ENCODE measurements at regions of chr12 and their contacts with region 1.

Region 1: DNA sequence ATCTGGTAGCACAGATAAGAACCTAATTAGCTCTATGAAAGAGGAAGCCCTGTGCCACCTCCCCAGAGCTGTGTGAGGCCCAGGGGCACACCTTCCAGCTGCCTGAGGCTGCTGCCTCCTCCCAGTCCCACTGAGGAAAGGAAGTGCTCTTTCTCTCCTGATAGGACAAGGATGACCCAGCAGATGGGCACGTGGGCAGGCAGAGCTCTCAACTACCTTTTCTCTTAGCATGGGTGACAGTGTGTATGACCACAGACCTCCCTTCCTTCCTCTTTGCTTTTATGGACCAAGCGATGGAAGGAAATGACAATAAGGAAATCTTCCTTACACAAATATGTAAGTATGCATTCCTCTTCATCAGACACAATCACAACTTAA is 127.6 kb upstream of the AMIGO2 start:
- DNase-seq: peak; percentile 71
- H3K4me3 Mint-ChIP-seq: peak overlapping the region; percentile 60
- H3K27ac Mint-ChIP-seq: peak overlapping the region; percentile 89
- H3K4me1 Mint-ChIP-seq: peaks cover 70% of the 10 kb centered on the region
- H3K27me3 Mint-ChIP-seq: no peaks in the 10 kb centered on the region

Region 2: GRCh38 chr12:47079468-47079980 is 127.8 kb before region 1 on chr12 and contains the starts of genes AMIGO2 and PCED1B:
- CTCF ChIA-PET with region 1: interaction called, 12 read pairs
- POLR2A ChIA-PET with region 1: interaction called, 49 read pairs
- DNase-seq: peak; percentile 68
- H3K4me3 Mint-ChIP-seq: peak within 1 kb of the TSS; percentile 92
- H3K27ac Mint-ChIP-seq: peak within 1 kb of the TSS; percentile 79
- H3K4me1 Mint-ChIP-seq: peaks cover 67% of the 10 kb centered on the region
- H3K27me3 Mint-ChIP-seq: no peaks in the 10 kb centered on the region
- total RNA-seq, gene AMIGO2: 6.6 to 7.1 TPM
- total RNA-seq, gene PCED1B: 57.1 to 62.2 TPM

Region 3: DNA sequence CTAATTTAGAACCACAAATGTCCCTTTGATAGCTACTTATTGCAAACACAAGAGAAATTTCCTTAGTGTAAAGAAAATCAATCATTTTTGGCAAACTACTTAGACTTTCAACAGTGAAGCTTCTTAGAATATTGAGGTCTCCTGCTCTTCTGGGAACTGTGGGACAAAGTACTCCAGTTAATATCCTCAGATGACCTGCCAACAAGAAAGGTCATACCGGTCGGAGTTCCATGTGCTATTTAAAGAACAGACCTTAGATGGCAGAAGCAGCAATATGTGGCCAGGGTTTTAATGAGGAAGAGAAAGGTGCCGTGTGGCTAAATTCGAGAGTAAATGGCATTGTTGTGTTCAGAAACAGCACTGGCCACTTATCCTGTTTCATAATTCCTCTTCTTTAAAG is 12.8 kb before region 1 on chr12:
- CTCF ChIA-PET with region 1: interaction called, 41 read pairs
- POLR2A ChIA-PET with region 1: interaction called, 61 read pairs
- DNase-seq: no peak
- H3K4me3 Mint-ChIP-seq: no peak overlapping the region
- H3K27ac Mint-ChIP-seq: peak overlapping the region; percentile 84
- H3K4me1 Mint-ChIP-seq: peaks cover 56% of the 10 kb centered on the region
- H3K27me3 Mint-ChIP-seq: no peaks in the 10 kb centered on the region

Region 4: GRCh38 chr12:47224563-47225133 is 17.3 kb after region 1 on chr12:
- CTCF ChIA-PET with region 1: interaction called, 6 read pairs
- POLR2A ChIA-PET with region 1: interaction called, 222 read pairs
- DNase-seq: no peak
- H3K4me3 Mint-ChIP-seq: no peak overlapping the region
- H3K27ac Mint-ChIP-seq: no peak overlapping the region
- H3K4me1 Mint-ChIP-seq: peaks cover 72% of the 10 kb centered on the region
- H3K27me3 Mint-ChIP-seq: no peaks in the 10 kb centered on the region

Region 5: DNA sequence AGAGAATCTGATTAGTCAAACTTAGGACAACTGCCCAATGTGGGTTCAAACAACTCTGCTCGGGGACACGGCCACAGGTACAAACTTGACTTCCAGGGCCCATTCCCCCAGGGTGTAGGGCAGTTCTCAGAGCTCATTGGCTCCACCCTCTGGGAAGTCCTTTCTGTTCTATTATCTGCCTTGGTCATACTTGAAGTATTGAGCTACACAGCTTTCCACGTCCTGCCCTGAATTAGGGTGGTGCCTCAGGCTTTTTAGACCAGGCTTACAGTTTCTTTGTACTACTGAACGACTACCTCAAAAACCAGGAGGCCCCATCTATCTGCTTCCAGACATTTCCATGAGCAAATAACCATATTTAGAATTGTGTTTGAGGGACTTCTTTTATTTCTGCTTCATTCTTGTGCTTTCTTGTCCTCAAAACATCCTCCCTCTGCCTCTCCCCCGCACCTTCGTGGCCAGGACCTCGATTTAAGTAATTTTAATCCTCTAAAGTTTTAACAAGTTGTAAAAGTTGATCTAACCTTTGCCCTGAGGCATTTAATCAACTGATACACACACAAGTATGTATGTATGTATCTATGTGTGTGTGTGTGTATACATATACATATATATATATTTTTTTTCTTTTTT is 154.2 kb after region 1 on chr12:
- CTCF ChIA-PET with region 1: no interaction called
- POLR2A ChIA-PET with region 1: interaction called, 97 read pairs
- DNase-seq: peak; percentile 68
- H3K4me3 Mint-ChIP-seq: peak overlapping the region; percentile 76
- H3K27ac Mint-ChIP-seq: peak overlapping the region; percentile 100
- H3K4me1 Mint-ChIP-seq: peaks cover 60% of the 10 kb centered on the region
- H3K27me3 Mint-ChIP-seq: no peaks in the 10 kb centered on the region

Region 6: GRCh38 chr12:47408171-47408871 is 201.0 kb after region 1 on chr12:
- CTCF ChIA-PET with region 1: interaction called, 4 read pairs
- POLR2A ChIA-PET with region 1: interaction called, 11 read pairs
- DNase-seq: peak; percentile 61
- H3K4me3 Mint-ChIP-seq: no peak overlapping the region
- H3K27ac Mint-ChIP-seq: no peak overlapping the region
- H3K4me1 Mint-ChIP-seq: peaks cover 28% of the 10 kb centered on the region
- H3K27me3 Mint-ChIP-seq: no peaks in the 10 kb centered on the region